Right lobe of liver (tissue), 6 donors: ENCODE measurements at regions of chr20 and their contacts with region 1.

Region 1: GRCh38 chr20:62302341-62303058 is at the start of gene ADRM1:
- DNase-seq: peak; percentile 97
- ATAC-seq: peak; percentile 79 to 87 (median 84)
- H3K4me3 ChIP-seq: peak within 1 kb of the TSS; percentile 85 to 96 (median 86)
- H3K27ac ChIP-seq: peak within 1 kb of the TSS; percentile 94 to 96 (median 95)
- H3K4me1 ChIP-seq: peaks cover 0 to 38% (median 17%) of the 10 kb centered on the region in 4 donors
- H3K27me3 ChIP-seq: no peaks in the 10 kb centered on the region
- CTCF ChIP-seq: peak; percentile 96 to 99 (median 98)
- POLR2A ChIP-seq: peak; percentile 73
- total RNA-seq, gene ADRM1: 49.5 to 139 (median 55.7) TPM

Region 2: GRCh38 chr20:62357187-62357667 is 54.7 kb after region 1 on chr20:
- intact Hi-C with region 1: loop called in 1 of 2 experiments (anchors 10 kb)
- DNase-seq: peak; percentile 44 to 78 (median 76)
- ATAC-seq: peak in 3 of 4 donors; percentile 0 to 24 (median 2)
- H3K4me3 ChIP-seq: no peak overlapping the region
- H3K27ac ChIP-seq: peak overlapping the region in 2 of 3 donors; percentile 63 to 66
- H3K4me1 ChIP-seq: peaks cover 0 to 62% (median 35%) of the 10 kb centered on the region in 4 donors
- H3K27me3 ChIP-seq: no peaks in the 10 kb centered on the region
- CTCF ChIP-seq: no peak
- POLR2A ChIP-seq: no peak

Region 3: DNA sequence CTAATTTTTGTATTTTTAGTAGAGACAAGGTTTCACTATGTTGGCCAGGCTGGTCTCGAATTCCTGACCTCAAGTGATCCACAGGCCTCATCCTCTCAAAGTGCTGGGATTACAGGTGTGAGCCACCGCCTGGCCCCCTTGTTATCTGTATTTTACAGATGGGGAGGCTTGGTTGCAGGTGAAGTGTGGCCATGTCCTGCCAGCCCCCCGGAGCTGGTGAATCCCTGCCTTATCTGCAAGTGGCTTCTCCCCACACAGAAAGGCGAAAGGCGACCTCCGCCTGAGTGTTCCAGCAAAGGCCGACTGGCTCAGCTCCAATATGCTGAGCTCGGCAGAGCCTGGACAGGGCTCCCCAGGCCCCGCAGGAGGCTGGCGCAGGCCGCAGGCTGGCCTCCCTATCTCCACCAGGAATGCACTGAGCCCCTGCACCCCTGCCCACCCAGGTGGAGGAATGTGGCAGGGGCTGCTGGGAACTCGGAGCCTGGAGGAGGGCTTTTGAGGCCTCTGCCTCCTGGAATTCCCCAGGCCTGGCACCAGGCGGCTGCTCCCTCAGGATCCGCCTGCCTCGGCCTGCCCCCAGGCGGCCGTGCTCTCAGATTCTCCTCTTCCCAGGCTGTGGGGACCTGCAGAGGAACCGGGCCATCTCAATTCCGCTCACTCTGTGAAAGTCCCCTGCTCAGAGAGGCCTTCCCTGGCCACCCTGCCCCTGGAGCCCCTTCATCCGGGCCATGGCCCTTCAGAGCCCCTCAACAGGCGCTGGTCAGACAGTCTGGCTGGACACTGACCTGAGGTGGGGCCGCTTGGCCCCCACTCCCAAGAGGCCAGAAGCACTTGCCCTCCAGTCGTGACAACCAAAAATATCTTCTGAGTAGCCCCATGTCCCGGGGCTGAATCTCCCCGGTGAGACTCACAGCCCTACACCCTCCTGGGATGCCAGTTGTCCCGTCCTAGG is 73.9 kb after region 1 on chr20:
- intact Hi-C with region 1: loop called (anchors 5 kb)
- DNase-seq: peak; percentile 79 to 82 (median 79)
- ATAC-seq: peak; percentile 90 to 95 (median 92)
- H3K4me3 ChIP-seq: peak overlapping the region in 2 of 3 donors; percentile 22 to 41
- H3K27ac ChIP-seq: peak overlapping the region in 1 of 3 donors; percentile 49
- H3K4me1 ChIP-seq: peaks cover 0 to 26% (median 5%) of the 10 kb centered on the region in 4 donors
- H3K27me3 ChIP-seq: no peaks in the 10 kb centered on the region
- CTCF ChIP-seq: peak; percentile 66 to 81 (median 72)
- POLR2A ChIP-seq: no peak